ENCODE measurements at regions of chr16 and their contacts with region 1.

Region 1: DNA sequence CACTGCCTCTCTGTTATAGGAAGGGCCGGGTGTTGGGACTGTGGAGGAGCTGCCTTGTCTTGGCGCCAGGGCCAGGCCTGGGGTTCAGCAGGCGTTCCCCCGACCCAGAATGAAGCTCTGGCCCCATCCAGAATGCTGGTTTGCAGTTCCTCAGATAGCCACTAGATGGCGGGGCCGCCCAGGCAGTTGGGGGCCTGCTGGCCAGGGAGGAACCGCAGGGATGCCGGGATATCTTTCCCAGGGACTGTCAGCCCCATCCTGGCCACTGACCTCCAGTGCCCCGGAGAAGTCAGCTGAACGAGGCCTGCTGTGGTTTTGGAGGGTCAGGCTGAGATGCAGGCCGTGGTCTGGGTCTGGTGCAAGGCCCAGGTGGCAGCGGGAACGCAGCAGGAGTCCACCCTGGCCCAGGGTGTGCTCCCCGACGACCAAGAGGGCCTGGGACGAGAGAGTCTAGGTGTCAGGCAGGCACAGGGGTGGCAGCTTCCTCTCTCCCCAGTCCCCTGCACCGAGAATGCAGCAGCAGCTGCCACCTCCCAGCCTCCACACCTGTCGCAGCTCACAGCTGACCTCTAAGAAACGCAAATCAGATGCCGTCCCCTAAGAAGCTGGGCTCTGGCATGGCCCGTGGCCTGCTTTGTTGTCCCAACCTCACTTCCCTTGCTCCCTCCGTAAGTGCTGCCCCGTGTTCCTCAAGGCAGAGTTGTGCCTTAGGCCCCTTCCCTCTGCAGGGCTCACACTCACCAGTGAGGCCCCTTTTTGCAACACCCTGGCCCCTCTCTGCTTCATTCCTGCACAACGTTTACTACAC is 51.2 kb downstream of the RMI2 start:
- DNase-seq: peak; percentile 39
- H3K4me3 ChIP-seq: no peak overlapping the region
- H3K27ac ChIP-seq: no peak overlapping the region
- H3K4me1 ChIP-seq: no peaks in the 10 kb centered on the region
- H3K27me3 ChIP-seq: no peaks in the 10 kb centered on the region
- CTCF ChIP-seq: peak; percentile 96 to 98

Region 2: DNA sequence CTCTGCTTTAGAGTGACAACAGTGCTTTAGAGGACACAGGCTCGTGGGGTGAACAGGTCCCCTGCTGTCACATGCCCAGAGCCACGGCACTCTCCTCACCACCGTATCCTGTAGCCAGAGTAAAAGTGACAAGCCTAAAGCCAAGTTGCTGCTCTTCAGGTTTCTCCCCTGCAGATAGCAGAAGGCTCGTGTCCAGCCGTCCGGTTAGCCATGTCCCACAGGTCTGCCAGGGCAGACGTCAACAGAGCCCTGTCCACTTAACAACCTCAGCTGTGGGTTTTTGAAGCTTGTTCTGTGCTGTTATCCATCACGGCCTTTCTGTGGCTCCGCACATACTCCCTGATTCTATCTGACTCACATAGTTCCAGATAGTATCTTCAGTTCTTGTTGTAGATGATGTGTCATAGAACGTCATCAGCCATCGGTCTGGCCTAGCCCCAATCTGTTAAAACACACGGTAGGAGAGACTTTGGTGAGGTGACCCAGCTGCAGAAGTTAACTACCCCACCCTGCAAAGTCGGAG is 241.1 kb before region 1 on chr16:
- CTCF ChIA-PET with region 1: no interaction called
- dilution Hi-C with region 1: no loop called
- in situ Hi-C with region 1: no loop called
- intact Hi-C with region 1: no loop called
- DNase-seq: peak; percentile 66
- H3K4me3 ChIP-seq: no peak overlapping the region
- H3K27ac ChIP-seq: no peak overlapping the region
- H3K4me1 ChIP-seq: no peaks in the 10 kb centered on the region
- H3K27me3 ChIP-seq: no peaks in the 10 kb centered on the region
- CTCF ChIP-seq: no peak

Region 3: GRCh38 chr16:11431915-11432465 is 35.5 kb after region 1 on chr16:
- CTCF ChIA-PET with region 1: no interaction called
- dilution Hi-C with region 1: no loop called
- in situ Hi-C with region 1: no loop called
- intact Hi-C with region 1: no loop called
- DNase-seq: no peak
- H3K4me3 ChIP-seq: no peak overlapping the region
- H3K27ac ChIP-seq: no peak overlapping the region
- H3K4me1 ChIP-seq: no peaks in the 10 kb centered on the region
- H3K27me3 ChIP-seq: no peaks in the 10 kb centered on the region
- CTCF ChIP-seq: no peak

Region 4: GRCh38 chr16:11446566-11447119 is 50.2 kb after region 1 on chr16:
- CTCF ChIA-PET with region 1: no interaction called
- dilution Hi-C with region 1: loop called (anchors 5 kb)
- in situ Hi-C with region 1: no loop called
- intact Hi-C with region 1: no loop called
- DNase-seq: no peak
- H3K4me3 ChIP-seq: no peak overlapping the region
- H3K27ac ChIP-seq: no peak overlapping the region
- H3K4me1 ChIP-seq: no peaks in the 10 kb centered on the region
- H3K27me3 ChIP-seq: no peaks in the 10 kb centered on the region
- CTCF ChIP-seq: no peak

Region 5: DNA sequence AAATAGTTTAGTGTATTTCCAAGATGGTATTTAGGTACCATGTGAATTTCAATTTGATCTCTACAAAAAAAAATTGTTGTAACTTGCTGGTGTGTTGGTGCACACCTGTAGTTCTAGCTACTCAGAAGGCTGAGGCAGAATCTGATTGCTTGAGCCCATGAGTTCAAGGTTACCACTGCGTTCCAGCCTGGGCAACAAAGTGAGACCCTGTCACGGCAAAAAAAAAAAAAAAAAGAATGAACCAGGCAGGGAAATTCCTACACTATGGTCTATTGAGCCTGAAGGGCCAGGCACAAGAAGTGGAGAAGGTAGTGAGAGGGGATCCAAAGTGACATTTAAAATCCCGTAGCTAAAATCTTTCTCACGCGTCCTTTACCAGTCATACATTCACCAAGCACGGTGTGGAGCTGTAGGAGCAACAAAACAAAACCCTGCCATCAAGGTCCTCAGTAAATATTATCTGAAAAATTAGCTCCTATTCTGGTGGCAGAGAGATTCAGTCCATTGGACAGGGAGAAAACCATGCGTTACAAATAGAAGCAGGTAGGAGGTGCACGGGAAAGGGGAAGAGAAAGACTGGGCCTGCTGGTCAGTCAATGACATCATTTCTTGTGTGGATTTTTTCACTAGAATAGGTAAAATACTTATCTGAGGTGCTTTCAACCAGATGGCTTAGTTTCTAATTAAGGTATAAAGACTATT is 319.0 kb after region 1 on chr16:
- CTCF ChIA-PET with region 1: interaction called, 3 read pairs
- dilution Hi-C with region 1: no loop called
- in situ Hi-C with region 1: no loop called
- intact Hi-C with region 1: loop called (anchors 1 kb)
- DNase-seq: no peak
- H3K4me3 ChIP-seq: no peak overlapping the region
- H3K27ac ChIP-seq: no peak overlapping the region
- H3K4me1 ChIP-seq: no peaks in the 10 kb centered on the region
- H3K27me3 ChIP-seq: no peaks in the 10 kb centered on the region
- CTCF ChIP-seq: no peak

Measured in mammary epithelial cell (primary cell).